ENCODE measurements at regions of chr4 and their contacts with region 1.

Region 1: GRCh38 chr4:77862478-77863216 is at the start of gene MRPL1:
- DNase-seq: peak; percentile 91
- H3K4me3 Mint-ChIP-seq: peak within 1 kb of the TSS; percentile 91
- H3K27ac Mint-ChIP-seq: peak within 1 kb of the TSS; percentile 100
- H3K4me1 Mint-ChIP-seq: peaks cover 58% of the 10 kb centered on the region
- H3K27me3 Mint-ChIP-seq: peaks cover 4% of the 10 kb centered on the region
- total RNA-seq, gene MRPL1: 37.5 to 39.8 TPM

Region 2: DNA sequence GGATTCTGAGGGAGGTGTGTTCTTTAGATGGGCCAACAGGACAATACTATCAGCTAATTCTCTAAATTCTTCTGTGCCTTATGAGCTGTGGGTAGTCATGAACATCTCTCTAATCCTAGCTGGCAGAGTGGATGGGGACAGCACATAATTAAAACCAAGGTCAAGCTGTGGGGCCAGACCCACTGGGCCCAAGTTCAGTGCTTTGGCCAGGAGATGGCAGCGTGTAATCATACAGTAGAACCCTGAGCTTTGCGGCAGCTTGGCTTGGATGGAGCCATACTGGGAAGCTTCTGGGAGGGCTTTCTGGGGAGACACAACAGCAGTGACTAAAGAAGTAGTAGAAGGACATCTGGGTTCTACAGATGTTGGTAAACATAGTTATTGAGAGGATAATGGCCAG is 397.4 kb before region 1 on chr4:
- CTCF ChIA-PET with region 1: no interaction called
- intact Hi-C with region 1: loop called (anchors 5 kb)
- DNase-seq: peak; percentile 62
- H3K4me3 Mint-ChIP-seq: no peak overlapping the region
- H3K27ac Mint-ChIP-seq: no peak overlapping the region
- H3K4me1 Mint-ChIP-seq: no peaks in the 10 kb centered on the region
- H3K27me3 Mint-ChIP-seq: peaks cover 9% of the 10 kb centered on the region

Region 3: GRCh38 chr4:77593993-77594392 is 268.7 kb before region 1 on chr4:
- CTCF ChIA-PET with region 1: interaction called, 3 read pairs
- intact Hi-C with region 1: loop called (anchors 2 kb)
- DNase-seq: no peak
- H3K4me3 Mint-ChIP-seq: no peak overlapping the region
- H3K27ac Mint-ChIP-seq: peak overlapping the region; percentile 75
- H3K4me1 Mint-ChIP-seq: peaks cover 49% of the 10 kb centered on the region
- H3K27me3 Mint-ChIP-seq: peaks cover 10% of the 10 kb centered on the region

Region 4: DNA sequence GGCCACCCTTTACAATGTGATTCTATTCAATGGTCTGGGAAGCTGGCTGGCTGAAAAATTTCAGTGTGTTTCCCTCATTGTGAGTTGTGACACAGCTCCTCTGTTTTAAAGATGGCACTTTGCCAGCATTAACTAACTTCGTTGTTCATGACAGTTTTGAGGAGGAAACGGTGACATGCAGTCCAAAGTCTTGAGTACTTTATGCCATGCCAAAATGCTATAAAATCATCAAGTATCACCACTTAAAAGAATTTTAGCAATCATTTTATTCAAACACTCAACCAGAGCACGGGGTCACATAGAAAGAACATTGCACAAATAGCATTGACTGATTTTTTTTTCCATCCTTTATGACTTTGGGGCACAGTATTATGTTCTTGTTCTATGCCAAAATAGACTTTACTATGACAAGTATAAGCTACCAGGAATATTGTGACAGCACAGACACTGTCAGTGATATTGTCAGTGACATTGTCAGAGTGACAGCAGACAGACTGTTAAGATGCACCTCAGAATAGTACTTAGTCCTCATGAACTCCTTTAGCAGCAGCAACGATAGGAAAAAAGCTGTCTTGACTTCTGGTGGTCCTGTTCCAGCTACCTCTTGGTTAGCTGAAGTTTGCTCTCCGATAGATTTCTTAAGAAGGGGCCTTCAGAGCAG is 210.3 kb before region 1 on chr4:
- CTCF ChIA-PET with region 1: no interaction called
- intact Hi-C with region 1: no loop called
- DNase-seq: no peak
- H3K4me3 Mint-ChIP-seq: no peak overlapping the region
- H3K27ac Mint-ChIP-seq: no peak overlapping the region
- H3K4me1 Mint-ChIP-seq: no peaks in the 10 kb centered on the region
- H3K27me3 Mint-ChIP-seq: peaks cover 14% of the 10 kb centered on the region

Region 5: DNA sequence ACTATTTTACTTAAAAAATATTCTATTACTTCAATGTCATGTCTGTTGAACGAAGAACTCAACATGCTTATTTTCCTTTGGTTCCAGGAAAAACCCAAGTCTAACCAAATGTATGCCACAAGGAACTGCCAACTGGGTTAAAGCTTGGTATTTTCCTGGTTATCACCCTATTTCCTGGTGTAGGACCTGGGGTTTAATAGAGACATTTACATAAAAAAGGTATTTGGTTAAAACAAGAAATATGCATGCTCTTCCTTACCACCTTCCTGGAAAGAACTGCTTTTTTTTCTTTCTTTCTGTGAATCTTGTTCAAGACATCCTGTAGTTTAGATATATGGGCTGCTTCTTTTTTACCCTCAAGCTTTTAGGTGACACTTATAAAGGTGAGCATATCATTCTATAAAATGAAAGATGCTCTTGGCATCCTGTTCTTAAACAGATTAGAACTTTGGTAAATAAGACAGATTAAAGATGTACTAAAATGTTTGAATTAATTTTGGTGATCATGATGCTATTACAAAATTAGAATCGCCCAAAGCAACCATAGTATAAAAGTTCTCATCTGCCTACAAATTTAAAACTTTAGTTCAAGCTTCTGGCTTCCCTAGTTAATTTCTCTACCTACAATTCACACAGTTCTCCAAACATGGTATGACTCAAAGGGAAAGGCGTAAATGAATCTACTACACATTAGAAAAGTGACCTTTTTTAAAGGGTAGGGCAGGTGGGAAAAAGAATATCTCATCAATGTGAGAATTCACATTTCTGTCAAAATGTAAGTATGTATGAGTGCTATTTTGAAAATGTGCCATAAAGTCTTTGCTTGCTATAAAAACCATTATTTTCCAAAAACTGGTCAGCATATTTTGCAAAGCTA is 147.0 kb before region 1 on chr4:
- CTCF ChIA-PET with region 1: interaction called, 3 read pairs
- intact Hi-C with region 1: loop called (anchors 1 kb)
- DNase-seq: no peak
- H3K4me3 Mint-ChIP-seq: no peak overlapping the region
- H3K27ac Mint-ChIP-seq: peak overlapping the region; percentile 53
- H3K4me1 Mint-ChIP-seq: peaks cover 33% of the 10 kb centered on the region
- H3K27me3 Mint-ChIP-seq: no peaks in the 10 kb centered on the region

Region 6: GRCh38 chr4:77819843-77820648 is 42.6 kb before region 1 on chr4:
- CTCF ChIA-PET with region 1: interaction called, 69 read pairs
- intact Hi-C with region 1: loop called (anchors 1 kb)
- DNase-seq: peak; percentile 97
- H3K4me3 Mint-ChIP-seq: peak overlapping the region; percentile 97
- H3K27ac Mint-ChIP-seq: peak overlapping the region; percentile 98
- H3K4me1 Mint-ChIP-seq: peaks cover 44% of the 10 kb centered on the region
- H3K27me3 Mint-ChIP-seq: no peaks in the 10 kb centered on the region

Region 7: GRCh38 chr4:77921701-77922100 is 59.1 kb after region 1 on chr4:
- CTCF ChIA-PET with region 1: no interaction called
- intact Hi-C with region 1: no loop called
- DNase-seq: no peak
- H3K4me3 Mint-ChIP-seq: no peak overlapping the region
- H3K27ac Mint-ChIP-seq: no peak overlapping the region
- H3K4me1 Mint-ChIP-seq: peaks cover 4% of the 10 kb centered on the region
- H3K27me3 Mint-ChIP-seq: no peaks in the 10 kb centered on the region

Region 8: DNA sequence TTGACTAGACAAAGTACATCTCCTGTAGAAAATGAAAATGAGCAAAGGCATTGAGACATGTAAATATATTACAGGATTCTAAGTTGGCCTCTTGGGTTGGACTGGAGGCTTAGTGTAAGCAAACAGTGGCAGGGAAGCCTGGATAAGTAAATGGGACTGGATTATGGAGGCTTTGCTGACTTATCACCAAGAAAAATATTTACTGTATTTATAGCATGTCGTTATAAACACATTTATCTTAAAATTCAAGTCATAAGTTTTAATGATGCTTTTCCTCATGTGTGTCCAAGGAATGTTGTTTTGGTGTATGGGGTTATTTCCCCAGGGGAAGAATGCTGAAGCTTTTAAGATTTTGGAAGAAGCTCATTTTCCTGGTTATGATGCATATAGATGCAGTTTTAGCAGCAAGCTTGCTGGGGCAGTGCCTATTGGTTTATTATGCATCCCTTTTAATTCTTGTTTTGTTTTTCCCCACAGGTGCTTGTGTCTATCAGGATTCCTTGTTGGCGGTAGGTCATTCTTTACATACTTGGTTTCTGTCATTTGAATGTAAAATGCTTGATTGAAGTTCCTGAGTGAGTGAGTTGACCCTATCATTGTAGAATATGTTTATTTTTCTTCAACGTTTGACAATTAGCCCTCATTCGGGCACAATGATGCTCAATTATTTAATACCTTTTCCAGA is 203.0 kb after region 1 on chr4:
- CTCF ChIA-PET with region 1: no interaction called
- intact Hi-C with region 1: no loop called
- DNase-seq: no peak
- H3K4me3 Mint-ChIP-seq: no peak overlapping the region
- H3K27ac Mint-ChIP-seq: no peak overlapping the region
- H3K4me1 Mint-ChIP-seq: no peaks in the 10 kb centered on the region
- H3K27me3 Mint-ChIP-seq: peaks cover 43% of the 10 kb centered on the region

Region 9: DNA sequence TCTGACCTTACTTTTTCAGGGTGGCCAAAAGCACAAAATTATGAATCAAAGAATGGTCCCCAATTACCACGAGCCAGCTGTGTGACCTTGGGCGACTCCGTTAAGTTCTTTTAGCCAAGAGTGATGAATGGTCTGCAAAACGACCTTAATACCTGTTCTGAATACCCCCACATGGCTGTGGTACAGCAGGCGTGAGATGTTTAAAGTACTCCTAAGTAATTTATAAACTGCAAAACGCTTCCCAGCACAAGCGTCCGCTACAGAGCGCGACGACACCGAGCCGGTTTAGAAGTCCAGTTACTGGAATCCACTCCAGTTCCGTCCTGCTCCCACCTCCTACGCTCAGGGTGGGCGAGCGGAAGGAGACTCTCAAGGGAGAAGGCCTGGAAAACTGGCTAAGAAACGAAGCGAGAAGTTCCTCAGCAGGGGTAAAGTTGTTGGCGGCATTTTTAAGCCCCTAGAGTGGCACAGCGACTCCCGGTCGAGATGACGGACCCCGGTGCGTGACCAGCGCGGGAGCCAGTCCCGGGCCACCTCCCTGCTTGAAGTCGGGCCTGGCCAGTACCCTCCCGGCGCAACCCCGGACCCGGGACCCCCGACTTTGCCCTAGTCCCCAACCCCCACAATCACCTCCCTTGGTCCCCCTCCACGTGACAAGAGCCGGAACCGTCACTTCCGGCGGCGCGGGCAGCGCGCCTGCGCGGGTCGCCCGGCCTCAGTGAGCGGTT is 912.8 kb after region 1 on chr4:
- CTCF ChIA-PET with region 1: no interaction called
- intact Hi-C with region 1: loop called (anchors 5 kb)
- DNase-seq: peak; percentile 84
- H3K4me3 Mint-ChIP-seq: peak overlapping the region; percentile 90
- H3K27ac Mint-ChIP-seq: peak overlapping the region; percentile 95
- H3K4me1 Mint-ChIP-seq: peaks cover 17% of the 10 kb centered on the region
- H3K27me3 Mint-ChIP-seq: no peaks in the 10 kb centered on the region

Measured in activated naive CD4-positive, alpha-beta T cell treated with anti-CD3 and anti-CD28 coated beads for 36 hours (primary cell).